HepG2 (cell line): ENCODE measurements at regions of chr2 and their contacts with region 1.

Region 1: DNA sequence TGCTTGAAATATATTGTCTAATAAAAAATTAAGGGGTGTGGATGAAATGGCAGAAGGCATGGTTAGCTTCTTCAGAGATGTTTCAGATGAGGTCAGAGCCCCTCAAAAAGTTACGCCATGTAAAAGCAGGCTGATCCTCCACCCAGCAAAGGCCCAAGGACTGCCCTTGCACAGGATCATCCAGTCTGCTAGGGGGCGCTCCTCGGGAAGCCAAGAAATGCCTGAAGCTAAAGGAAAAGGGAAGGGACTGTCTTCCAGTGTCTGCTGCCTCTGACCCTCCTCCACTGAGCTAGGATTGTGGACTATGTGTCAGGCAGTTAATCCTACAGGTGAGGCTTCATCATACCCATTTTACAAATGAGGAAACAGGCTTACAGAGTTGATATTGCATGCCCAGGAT is 33.8 kb upstream of the TEX51 start:
- DNase-seq: no peak
- ATAC-seq: peak; percentile 67
- H3K4me3 ChIP-seq: no peak overlapping the region
- H3K27ac ChIP-seq: no peak overlapping the region
- H3K4me1 ChIP-seq: no peaks in the 10 kb centered on the region
- H3K27me3 ChIP-seq: peaks cover 0 to 11% of the 10 kb centered on the region in 2 experiments; a peak in 1 of 5 replicates
- CTCF ChIP-seq: peak; percentile 52
- EP300 ChIP-seq: no peak
- POLR2A ChIP-seq: no peak
- RAD21 ChIP-seq: no peak

Region 2: GRCh38 chr2:126809340-126809739 is 55.5 kb before region 1 on chr2:
- CTCF ChIA-PET with region 1: no interaction called
- POLR2A ChIA-PET with region 1: no interaction called
- in situ Hi-C with region 1: no loop called
- intact Hi-C with region 1: no loop called
- DNase-seq: no peak
- ATAC-seq: no peak
- H3K4me3 ChIP-seq: no peak overlapping the region
- H3K27ac ChIP-seq: no peak overlapping the region
- H3K4me1 ChIP-seq: no peaks in the 10 kb centered on the region
- H3K27me3 ChIP-seq: peaks cover 0 to 20% of the 10 kb centered on the region in 2 experiments; a peak in 3 of 5 replicates
- CTCF ChIP-seq: no peak
- EP300 ChIP-seq: no peak
- POLR2A ChIP-seq: no peak
- RAD21 ChIP-seq: no peak

Region 3: GRCh38 chr2:127003070-127003800 is 138.4 kb after region 1 on chr2:
- CTCF ChIA-PET with region 1: no interaction called
- POLR2A ChIA-PET with region 1: no interaction called
- in situ Hi-C with region 1: no loop called
- intact Hi-C with region 1: loop called (anchors 1 kb)
- DNase-seq: peak; percentile 60
- ATAC-seq: peak; percentile 98
- H3K4me3 ChIP-seq: no peak overlapping the region; a peak in 1 of 6 replicates
- H3K27ac ChIP-seq: no peak overlapping the region
- H3K4me1 ChIP-seq: peaks cover 41% of the 10 kb centered on the region
- H3K27me3 ChIP-seq: peaks cover 1 to 8% of the 10 kb centered on the region in 2 experiments; a peak in 3 of 5 replicates
- CTCF ChIP-seq: peak; percentile 86
- EP300 ChIP-seq: no peak
- POLR2A ChIP-seq: no peak
- RAD21 ChIP-seq: peak; percentile 44; the same call in 1 of the 2 replicates

Region 4: GRCh38 chr2:127064642-127065250 is 199.9 kb after region 1 on chr2:
- CTCF ChIA-PET with region 1: no interaction called
- POLR2A ChIA-PET with region 1: no interaction called
- in situ Hi-C with region 1: no loop called
- intact Hi-C with region 1: no loop called
- DNase-seq: peak; percentile 83
- ATAC-seq: peak; percentile 86
- H3K4me3 ChIP-seq: peak overlapping the region in 1 of 3 experiments; percentile 56; a peak in 1 of 6 replicates
- H3K27ac ChIP-seq: no peak overlapping the region
- H3K4me1 ChIP-seq: peaks cover 22% of the 10 kb centered on the region
- H3K27me3 ChIP-seq: no peaks in the 10 kb centered on the region; a peak in 1 of 5 replicates
- CTCF ChIP-seq: peak; percentile 41; the same call in 1 of the 2 replicates
- EP300 ChIP-seq: peak in 1 of 2 experiments; percentile 62; a peak in 1 of 4 replicates
- POLR2A ChIP-seq: peak in 1 of 2 experiments; percentile 49; a peak in 2 of 4 replicates
- RAD21 ChIP-seq: no peak